GM12878 (cell line): ENCODE measurements at regions of chr10 and their contacts with region 1.

Region 1: DNA sequence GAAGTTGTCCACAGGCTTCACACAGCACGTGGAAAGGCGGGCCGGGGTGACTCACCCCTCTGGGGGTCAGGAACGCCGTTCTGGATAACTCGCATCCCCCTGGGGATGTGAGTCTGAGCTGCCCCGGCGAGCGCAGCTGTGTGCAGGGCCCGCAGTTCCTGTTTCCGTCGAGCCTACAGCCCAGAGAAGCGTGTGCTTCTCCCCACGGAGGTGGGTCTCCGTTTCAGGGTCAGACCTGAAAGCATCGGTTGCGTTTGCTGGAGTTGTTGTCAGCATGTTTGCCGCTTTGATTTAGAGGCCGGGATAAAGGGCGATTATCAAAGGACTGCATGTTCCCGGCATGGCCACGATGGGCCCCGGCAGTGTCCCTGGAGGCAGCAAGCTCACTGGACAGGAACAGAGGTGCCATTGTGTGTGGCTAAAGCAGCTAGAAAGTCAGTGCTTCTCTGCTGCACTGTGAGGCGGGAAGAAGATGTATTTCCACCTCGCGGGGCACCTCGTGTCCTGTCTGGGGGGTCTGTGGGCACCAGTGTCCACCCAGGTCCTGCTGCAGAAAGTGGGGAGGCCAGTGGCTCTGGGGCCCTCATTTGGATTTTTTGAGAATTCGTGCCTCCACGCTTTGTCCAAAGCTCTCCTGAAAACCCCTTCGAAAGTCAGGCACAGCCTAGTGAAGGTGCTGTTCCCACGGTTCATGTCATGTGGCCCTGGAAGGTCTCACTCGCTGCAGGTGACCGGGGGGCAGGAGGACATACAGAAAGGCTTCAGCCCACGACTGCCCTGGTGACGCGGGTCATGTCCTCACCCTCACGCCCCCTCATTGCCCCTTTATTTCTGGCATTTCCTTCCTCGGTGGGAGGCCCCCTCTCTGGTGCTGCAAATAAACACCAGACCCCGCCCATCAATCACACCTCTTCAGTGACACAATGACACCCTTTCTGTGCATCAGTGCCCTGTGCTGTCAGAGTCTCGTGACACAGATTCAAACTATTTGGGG is 27.4 kb upstream of the GDI2 start:
- DNase-seq: peak; percentile 59
- ATAC-seq: peak; percentile 90
- H3K4me3 ChIP-seq: peak overlapping the region; percentile 28; the same call in 1 of the 2 replicates
- H3K27ac ChIP-seq: peak overlapping the region; percentile 83
- H3K4me1 ChIP-seq: peaks cover 42% of the 10 kb centered on the region
- H3K27me3 ChIP-seq: no peaks in the 10 kb centered on the region
- CTCF ChIP-seq: no peak
- EP300 ChIP-seq: peak; percentile 33 to 51; a peak in 2 of 4 replicates
- POLR2A ChIP-seq: peak; percentile 92
- RAD21 ChIP-seq: 0 out of 2 replicates have a peak, but pooled peaks have one; percentile 18

Region 2: DNA sequence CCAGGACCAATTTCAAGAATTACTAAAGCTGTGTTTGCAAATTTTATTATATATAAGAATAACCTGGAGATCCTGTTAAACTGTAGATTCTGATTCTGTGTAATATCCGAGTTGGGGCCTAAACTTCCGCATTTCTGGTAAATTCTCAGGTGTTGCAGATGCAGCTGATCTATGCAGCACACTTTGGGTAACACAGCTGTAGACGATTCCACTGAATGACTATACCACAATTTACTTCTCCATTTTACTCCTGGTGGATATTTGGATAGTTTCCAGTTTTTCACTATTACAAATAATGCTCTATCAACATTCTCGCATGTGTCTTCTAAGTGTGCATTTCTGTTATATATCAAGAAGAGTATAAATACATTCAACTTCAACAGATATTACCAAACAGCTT is 34.9 kb before region 1 on chr10:
- CTCF ChIA-PET with region 1: interaction called, 14 read pairs
- POLR2A ChIA-PET with region 1: interaction called, 32 read pairs
- RAD21 ChIA-PET with region 1: interaction called, 183 read pairs
- SMC1A ChIA-PET with region 1: interaction called, 54 read pairs
- in situ Hi-C with region 1: no loop called
- intact Hi-C with region 1: no loop called
- DNase-seq: no peak
- ATAC-seq: no peak
- H3K4me3 ChIP-seq: no peak overlapping the region
- H3K27ac ChIP-seq: no peak overlapping the region
- H3K4me1 ChIP-seq: peaks cover 8% of the 10 kb centered on the region
- H3K27me3 ChIP-seq: no peaks in the 10 kb centered on the region
- CTCF ChIP-seq: no peak
- EP300 ChIP-seq: no peak
- POLR2A ChIP-seq: no peak
- RAD21 ChIP-seq: no peak

Region 3: GRCh38 chr10:5818894-5819293 is 21.7 kb before region 1 on chr10:
- CTCF ChIA-PET with region 1: interaction called, 74 read pairs
- POLR2A ChIA-PET with region 1: interaction called, 46 read pairs
- RAD21 ChIA-PET with region 1: interaction called, 183 read pairs
- SMC1A ChIA-PET with region 1: interaction called, 42 read pairs
- in situ Hi-C with region 1: no loop called
- intact Hi-C with region 1: loop called (anchors 1 kb)
- DNase-seq: no peak
- ATAC-seq: peak; percentile 50
- H3K4me3 ChIP-seq: no peak overlapping the region
- H3K27ac ChIP-seq: peak overlapping the region; percentile 56; the same call in 1 of the 2 replicates
- H3K4me1 ChIP-seq: peaks cover 59% of the 10 kb centered on the region
- H3K27me3 ChIP-seq: no peaks in the 10 kb centered on the region
- CTCF ChIP-seq: no peak
- EP300 ChIP-seq: no peak
- POLR2A ChIP-seq: no peak
- RAD21 ChIP-seq: no peak

Region 4: GRCh38 chr10:5862360-5862961 is 21.9 kb after region 1 on chr10:
- CTCF ChIA-PET with region 1: interaction called, 23 read pairs
- POLR2A ChIA-PET with region 1: interaction called, 45 read pairs
- RAD21 ChIA-PET with region 1: interaction called, 107 read pairs
- SMC1A ChIA-PET with region 1: interaction called, 86 read pairs
- in situ Hi-C with region 1: no loop called
- intact Hi-C with region 1: no loop called
- DNase-seq: peak; percentile 94
- ATAC-seq: peak; percentile 96
- H3K4me3 ChIP-seq: peak overlapping the region; percentile 34
- H3K27ac ChIP-seq: peak overlapping the region; percentile 73
- H3K4me1 ChIP-seq: peaks cover 20% of the 10 kb centered on the region
- H3K27me3 ChIP-seq: no peaks in the 10 kb centered on the region
- CTCF ChIP-seq: no peak
- EP300 ChIP-seq: peak; percentile 74 to 88; a peak in 2 of 4 replicates
- POLR2A ChIP-seq: peak; percentile 46; the same call in 1 of the 2 replicates
- RAD21 ChIP-seq: no peak

Region 5: DNA sequence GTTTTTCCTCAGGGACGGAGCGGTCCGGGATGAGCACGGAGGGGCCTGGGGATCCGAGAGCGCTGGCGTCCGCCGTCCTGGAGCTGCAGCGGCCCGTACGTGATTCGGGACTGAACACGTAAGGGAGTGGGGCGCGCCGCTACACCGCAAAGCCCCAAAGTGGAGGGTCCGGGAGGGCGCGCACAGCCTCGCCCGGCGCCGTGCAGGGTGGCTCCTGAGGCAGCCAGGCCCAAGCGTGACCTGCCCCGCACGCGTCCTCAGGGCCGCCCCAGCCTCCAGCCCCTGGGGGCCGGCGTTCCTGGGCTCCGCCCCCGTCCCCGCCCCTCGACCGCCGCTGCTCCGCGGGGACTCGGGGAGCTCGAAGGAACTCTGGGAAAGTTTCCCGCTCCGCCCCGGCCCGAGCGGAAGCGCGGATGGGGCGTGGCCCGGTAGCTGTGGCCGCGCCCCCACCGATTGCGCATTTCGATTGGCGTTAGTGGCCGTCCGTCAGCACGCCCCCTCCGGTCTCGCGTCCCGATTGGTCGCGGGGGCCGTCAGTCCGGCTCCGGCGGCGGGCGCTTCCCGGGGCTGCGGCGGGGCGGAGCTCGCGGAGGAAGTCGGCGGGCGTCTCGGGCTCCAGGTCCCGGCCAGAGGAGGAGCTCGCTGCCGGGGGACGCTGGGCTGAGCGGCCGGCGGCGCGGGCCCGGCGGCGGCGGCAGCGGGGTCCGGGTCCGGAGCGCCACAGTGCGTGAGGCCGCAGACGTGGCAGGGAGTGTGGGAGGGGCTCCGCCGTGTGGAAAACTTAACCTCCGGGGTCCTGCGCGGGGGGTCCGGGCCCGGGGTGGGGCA is 49.2 kb after region 1 on chr10 and contains the starts of genes ANKRD16 and FBH1:
- CTCF ChIA-PET with region 1: interaction called, 5 read pairs
- POLR2A ChIA-PET with region 1: interaction called, 11 read pairs
- RAD21 ChIA-PET with region 1: interaction called, 21 read pairs
- SMC1A ChIA-PET with region 1: interaction called, 8 read pairs
- in situ Hi-C with region 1: no loop called
- intact Hi-C with region 1: no loop called
- DNase-seq: peak; percentile 78
- ATAC-seq: peak; percentile 92
- H3K4me3 ChIP-seq: peak within 1 kb of the TSS; percentile 96
- H3K27ac ChIP-seq: peak within 1 kb of the TSS; percentile 73
- H3K4me1 ChIP-seq: peaks cover 14% of the 10 kb centered on the region
- H3K27me3 ChIP-seq: no peaks in the 10 kb centered on the region
- CTCF ChIP-seq: peak in 1 of 3 experiments; percentile 2; a peak in 1 of 6 replicates
- EP300 ChIP-seq: no peak
- POLR2A ChIP-seq: peak; percentile 95
- RAD21 ChIP-seq: no peak
- polyA plus RNA-seq, gene ANKRD16: 1.4 to 2.9 TPM
- polyA plus RNA-seq, gene FBH1: 6.1 to 19.0 TPM

Region 6: DNA sequence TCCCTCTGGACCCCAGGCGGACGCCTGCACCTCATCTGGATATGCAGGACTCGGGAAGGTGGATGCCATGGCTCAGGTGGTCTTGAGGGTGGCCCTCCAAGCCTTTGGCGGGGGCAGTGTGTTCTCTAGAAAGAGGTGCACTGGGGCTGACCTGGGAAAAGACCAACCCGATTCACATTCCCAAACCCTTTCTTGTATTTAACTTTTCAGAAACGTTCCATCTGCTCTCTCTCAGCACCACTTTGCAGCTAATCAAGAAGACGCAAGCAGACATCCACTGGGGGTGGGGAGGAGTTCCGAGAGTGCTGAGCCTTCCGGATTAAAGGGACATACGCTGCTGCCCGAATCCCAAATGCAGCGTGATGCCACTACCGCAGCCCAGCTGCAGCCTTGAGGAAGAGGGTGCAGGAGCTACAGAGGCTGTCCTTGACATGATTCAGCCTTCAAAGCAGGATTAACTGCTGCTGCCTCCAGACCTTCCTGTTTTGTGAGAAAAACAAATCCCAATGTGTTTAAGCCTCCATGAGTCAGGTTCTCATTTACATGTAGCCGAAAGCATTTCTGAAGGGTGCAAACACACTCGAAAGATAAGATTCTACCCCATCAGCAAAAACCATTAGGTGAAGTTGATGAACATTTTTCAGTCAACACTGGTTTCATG is 288.1 kb after region 1 on chr10:
- CTCF ChIA-PET with region 1: no interaction called
- POLR2A ChIA-PET with region 1: no interaction called
- RAD21 ChIA-PET with region 1: no interaction called
- SMC1A ChIA-PET with region 1: no interaction called
- in situ Hi-C with region 1: no loop called
- intact Hi-C with region 1: no loop called
- DNase-seq: no peak
- ATAC-seq: no peak
- H3K4me3 ChIP-seq: no peak overlapping the region
- H3K27ac ChIP-seq: no peak overlapping the region
- H3K4me1 ChIP-seq: peaks cover 24% of the 10 kb centered on the region
- H3K27me3 ChIP-seq: no peaks in the 10 kb centered on the region
- CTCF ChIP-seq: no peak
- EP300 ChIP-seq: no peak
- POLR2A ChIP-seq: no peak
- RAD21 ChIP-seq: no peak